ENCODE measurements at regions of chr10 and their contacts with region 1.

Region 1: DNA sequence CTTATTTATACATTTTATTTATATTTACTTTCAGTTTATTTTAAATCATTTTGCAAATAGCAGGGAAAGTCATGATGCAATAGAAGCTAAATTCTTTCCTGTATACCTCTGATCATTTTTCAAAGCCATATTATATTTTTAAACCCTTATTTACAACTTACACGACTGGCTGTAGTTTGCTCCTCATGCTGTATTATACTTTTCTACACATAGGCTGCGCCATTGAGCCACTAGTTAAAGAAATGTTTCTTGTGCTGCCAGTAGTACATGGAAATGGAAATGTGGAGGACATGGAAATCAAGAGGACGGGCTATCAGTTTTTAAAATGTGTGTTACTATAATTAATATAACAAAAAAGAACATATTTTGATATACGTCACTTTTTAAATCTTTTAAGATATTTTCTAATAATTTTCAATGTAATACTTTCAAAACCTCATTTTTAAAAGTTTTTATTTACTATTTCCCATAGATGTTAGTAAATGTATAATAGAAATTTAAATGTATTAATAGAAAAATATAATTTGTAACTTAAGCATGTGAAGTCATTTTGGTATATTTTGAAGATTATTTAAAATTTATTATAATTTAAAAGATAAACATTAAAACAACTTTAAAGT is 118.5 kb downstream of the VTI1A start:
- DNase-seq: peak in 1 of 2 donors; percentile 18
- ATAC-seq: peak; percentile 89

Region 2: DNA sequence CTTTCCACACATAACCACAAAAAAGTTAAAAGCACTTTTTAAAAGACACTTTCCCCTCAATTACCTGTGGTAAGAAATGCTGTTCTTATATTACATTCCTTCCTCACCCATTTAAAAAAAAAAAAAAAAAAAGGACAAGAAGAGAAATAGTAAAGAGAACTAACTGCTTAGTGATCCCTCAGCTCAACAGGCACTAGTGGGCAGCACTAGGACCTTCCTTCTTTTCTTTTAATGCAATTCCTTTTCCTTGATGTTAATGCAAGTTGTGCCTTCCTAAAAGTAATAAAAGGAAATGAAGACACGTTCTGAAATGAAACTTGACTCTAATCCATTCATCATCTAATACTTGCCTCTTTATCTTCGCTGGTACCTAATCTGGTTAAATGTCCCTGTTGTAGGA is 574.2 kb after region 1 on chr10:
- intact Hi-C with region 1: loop called in 1 of 2 experiments (anchors 10 kb)
- DNase-seq: no peak
- ATAC-seq: no peak

Region 3: DNA sequence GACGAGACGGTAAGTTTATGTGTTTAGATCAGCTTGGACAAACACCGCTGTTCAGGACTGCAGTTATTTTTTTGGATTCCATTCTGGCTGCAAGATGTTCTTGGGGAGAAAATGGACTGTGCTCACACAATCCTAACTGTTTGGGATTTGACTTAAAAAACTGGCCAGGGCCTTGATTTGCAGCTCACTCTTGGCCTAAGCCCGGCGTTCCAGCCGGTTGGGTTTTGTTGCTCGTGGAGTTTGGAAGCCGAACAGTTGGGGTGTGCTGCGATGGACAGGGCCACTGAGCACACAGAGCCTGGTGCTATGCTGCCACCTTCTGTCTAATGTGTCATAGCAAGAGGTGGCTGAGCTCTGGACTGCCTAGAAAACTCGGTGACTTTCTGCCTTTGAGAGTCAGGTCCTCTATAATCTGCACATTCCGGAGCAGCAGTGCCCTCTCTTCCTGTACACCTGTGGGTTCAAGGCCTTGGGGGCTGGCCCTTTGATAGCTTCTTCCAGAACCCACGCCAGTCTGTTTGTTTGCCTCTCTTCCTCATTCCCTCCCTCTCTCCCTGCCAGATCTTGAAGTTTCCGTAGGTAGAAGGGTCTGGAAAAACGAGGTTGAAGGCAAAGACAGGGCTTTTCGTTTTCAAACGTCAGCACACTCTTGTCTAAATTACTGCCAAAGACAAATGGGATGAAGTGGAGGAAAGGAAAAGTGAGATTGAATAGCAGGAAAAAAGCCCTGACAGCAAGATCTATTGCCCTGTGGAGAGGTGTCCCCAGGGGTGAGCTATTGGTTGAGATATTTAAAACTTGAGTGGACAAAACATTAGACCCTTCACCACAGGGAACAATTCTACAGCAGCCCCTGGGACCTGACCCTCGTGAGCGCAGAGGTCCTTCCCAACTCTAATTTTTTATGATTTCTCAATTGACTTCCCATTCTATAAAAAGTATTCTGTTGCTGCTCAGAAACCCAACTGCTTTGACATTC is 819.8 kb after region 1 on chr10:
- intact Hi-C with region 1: loop called in 1 of 2 experiments (anchors 10 kb)
- DNase-seq: peak; percentile 74 to 80
- ATAC-seq: peak; percentile 100

Measured in left colon (tissue), 2 donors.